HepG2 (cell line): ENCODE measurements at regions of chr15 and their contacts with region 1.

Region 1: DNA sequence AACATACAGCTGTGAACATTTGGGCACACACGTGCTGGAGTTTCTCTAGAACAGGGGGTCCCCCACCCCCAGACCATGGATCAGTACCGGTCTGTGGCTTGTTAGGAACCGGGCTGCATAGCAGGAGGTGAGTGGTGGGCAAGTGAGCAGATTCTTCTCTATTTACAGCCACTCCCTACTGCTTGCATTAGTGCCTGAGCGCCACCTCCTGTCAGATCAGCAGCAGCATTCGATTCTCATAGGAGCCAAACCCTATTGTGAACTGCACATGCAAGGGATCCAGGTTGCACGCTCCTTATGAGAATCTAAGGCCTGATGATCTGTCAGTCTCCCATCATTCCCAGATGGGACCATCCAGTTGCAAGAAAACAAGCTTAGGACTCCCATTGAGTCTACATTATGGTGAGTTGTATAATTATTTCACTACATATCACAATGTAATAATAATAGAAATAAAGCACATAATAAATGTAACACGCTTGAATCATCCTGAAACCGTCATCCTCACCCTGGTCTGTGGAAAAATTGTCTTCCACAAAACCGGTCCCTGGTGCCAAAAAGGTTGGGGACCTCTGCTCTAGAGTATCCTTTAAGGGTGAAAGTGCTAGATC is 25.8 kb downstream of the CHRM5 start:
- DNase-seq: peak; percentile 45
- ATAC-seq: peak; percentile 88
- H3K4me3 ChIP-seq: no peak overlapping the region
- H3K27ac ChIP-seq: no peak overlapping the region
- H3K4me1 ChIP-seq: no peaks in the 10 kb centered on the region
- H3K27me3 ChIP-seq: no peaks in the 10 kb centered on the region
- CTCF ChIP-seq: peak; percentile 82
- EP300 ChIP-seq: no peak
- POLR2A ChIP-seq: no peak
- RAD21 ChIP-seq: peak; percentile 67

Region 2: GRCh38 chr15:33226559-33227181 is 767.4 kb before region 1 on chr15:
- CTCF ChIA-PET with region 1: no interaction called
- POLR2A ChIA-PET with region 1: no interaction called
- in situ Hi-C with region 1: loop called (anchors 25 kb)
- intact Hi-C with region 1: no loop called
- DNase-seq: no peak
- ATAC-seq: peak; percentile 75
- H3K4me3 ChIP-seq: no peak overlapping the region
- H3K27ac ChIP-seq: no peak overlapping the region
- H3K4me1 ChIP-seq: no peaks in the 10 kb centered on the region
- H3K27me3 ChIP-seq: no peaks in the 10 kb centered on the region
- CTCF ChIP-seq: no peak
- EP300 ChIP-seq: no peak
- POLR2A ChIP-seq: no peak
- RAD21 ChIP-seq: no peak